K562 (cell line): ENCODE measurements at regions of chr6 and their contacts with region 1.

Region 1: GRCh38 chr6:30828027-30828960 is 56.0 kb upstream of the DDR1 start:
- DNase-seq: peak; percentile 92 to 95 (median 94)
- ATAC-seq: peak; percentile 97
- H3K4me3 ChIP-seq: no peak overlapping the region
- H3K27ac ChIP-seq: peak overlapping the region; percentile 76
- H3K4me1 ChIP-seq: peaks cover 11 to 23% of the 10 kb centered on the region in 2 experiments
- H3K27me3 ChIP-seq: no peaks in the 10 kb centered on the region
- CTCF ChIP-seq: peak; percentile 97 to 99 (median 99)
- EP300 ChIP-seq: peak; percentile 69
- POLR2A ChIP-seq: no peak
- RAD21 ChIP-seq: peak; percentile 100

Region 2: DNA sequence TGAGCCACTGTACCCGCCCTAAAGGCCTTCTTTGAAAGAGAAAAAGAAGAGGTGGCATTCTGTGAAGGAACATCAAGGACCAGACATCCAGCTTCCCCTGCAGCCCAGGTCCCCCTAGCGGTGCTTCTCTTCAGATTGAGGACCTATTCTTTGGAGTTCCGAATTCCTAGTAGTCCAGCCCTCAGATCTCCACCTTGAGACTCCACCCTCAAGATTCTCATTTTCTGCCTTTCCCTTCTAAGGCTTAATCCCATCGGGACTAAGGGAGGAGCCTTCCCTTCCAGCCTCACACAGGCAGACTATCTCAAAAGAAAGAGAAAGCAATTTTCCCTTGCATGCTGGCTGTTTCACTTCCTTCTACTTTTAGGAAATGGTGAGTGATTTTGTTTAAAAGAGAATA is 214.5 kb after region 1 on chr6:
- CTCF ChIA-PET with region 1: no interaction called
- POLR2A ChIA-PET with region 1: no interaction called
- in situ Hi-C with region 1: no loop called
- intact Hi-C with region 1: loop called (anchors 1 kb)
- DNase-seq: peak; percentile 54 to 75 (median 62)
- ATAC-seq: peak; percentile 86
- H3K4me3 ChIP-seq: no peak overlapping the region
- H3K27ac ChIP-seq: no peak overlapping the region
- H3K4me1 ChIP-seq: no peaks in the 10 kb centered on the region
- H3K27me3 ChIP-seq: peaks cover 34 to 61% of the 10 kb centered on the region in 2 experiments
- CTCF ChIP-seq: peak; percentile 71 to 86 (median 74)
- EP300 ChIP-seq: no peak
- POLR2A ChIP-seq: no peak
- RAD21 ChIP-seq: peak; percentile 60 to 77

Region 3: DNA sequence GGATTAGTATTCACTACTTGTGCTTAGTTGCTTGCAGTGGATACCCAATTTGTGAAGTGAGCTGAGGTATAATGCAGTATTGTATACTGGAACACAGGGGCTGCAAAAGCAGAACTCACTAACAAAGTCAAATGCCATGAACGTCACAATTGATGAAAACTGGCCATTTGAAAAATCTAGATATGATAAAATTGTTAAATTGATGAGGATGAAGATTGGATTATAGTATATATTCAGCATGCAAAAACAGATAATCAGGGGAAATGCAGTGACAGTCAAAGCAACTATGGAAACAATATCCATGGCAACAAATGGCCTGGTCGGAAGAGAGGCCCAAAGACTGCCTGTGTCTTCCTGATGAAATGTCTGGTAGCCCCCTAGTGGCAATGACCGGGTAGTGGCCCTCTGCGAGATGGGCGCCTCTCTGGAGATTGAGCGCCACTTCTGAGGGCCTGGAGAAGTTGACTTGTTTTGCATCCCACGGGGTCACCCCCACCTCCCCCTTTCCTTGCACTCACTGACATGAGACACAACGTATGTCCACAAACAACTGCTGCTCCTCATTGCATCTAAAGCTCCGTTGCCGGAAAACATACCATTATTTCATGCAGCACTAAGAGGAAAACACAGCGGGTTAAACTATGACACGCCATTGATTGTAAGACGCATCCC is 240.5 kb after region 1 on chr6:
- CTCF ChIA-PET with region 1: interaction called, 4 read pairs
- POLR2A ChIA-PET with region 1: no interaction called
- in situ Hi-C with region 1: no loop called
- intact Hi-C with region 1: loop called (anchors 1 kb)
- DNase-seq: peak; percentile 84 to 87 (median 85)
- ATAC-seq: peak; percentile 99
- H3K4me3 ChIP-seq: no peak overlapping the region
- H3K27ac ChIP-seq: no peak overlapping the region
- H3K4me1 ChIP-seq: peaks cover 0 to 3% of the 10 kb centered on the region in 2 experiments; a peak in 2 of 5 replicates
- H3K27me3 ChIP-seq: peaks cover 0 to 6% of the 10 kb centered on the region in 2 experiments; a peak in 2 of 5 replicates
- CTCF ChIP-seq: peak; percentile 93 to 98 (median 95)
- EP300 ChIP-seq: no peak
- POLR2A ChIP-seq: no peak
- RAD21 ChIP-seq: peak; percentile 57 to 79

Region 4: GRCh38 chr6:31079656-31080261 is 251.5 kb after region 1 on chr6:
- CTCF ChIA-PET with region 1: interaction called, 11 read pairs
- POLR2A ChIA-PET with region 1: interaction called, 3 read pairs
- in situ Hi-C with region 1: loop called (anchors 5 kb)
- intact Hi-C with region 1: no loop called
- DNase-seq: peak; percentile 43 to 79 (median 56)
- ATAC-seq: peak; percentile 80
- H3K4me3 ChIP-seq: no peak overlapping the region
- H3K27ac ChIP-seq: no peak overlapping the region
- H3K4me1 ChIP-seq: peaks cover 6% of the 10 kb centered on the region in 2 experiments; a peak in 4 of 5 replicates
- H3K27me3 ChIP-seq: no peaks in the 10 kb centered on the region
- CTCF ChIP-seq: peak; percentile 85 to 95 (median 89)
- EP300 ChIP-seq: 0 out of 2 replicates have a peak, but pooled peaks have one; percentile 44
- POLR2A ChIP-seq: no peak
- RAD21 ChIP-seq: peak; percentile 66 to 84